Ovary (tissue), 10 donors: ENCODE measurements at regions of chr19 and their contacts with region 1.

Region 1: GRCh38 chr19:32224371-32225244 is 120.8 kb upstream of the ZNF507 start:
- DNase-seq: peak; percentile 49 to 81 (median 72)
- H3K4me3 ChIP-seq: no peak overlapping the region
- H3K27ac ChIP-seq: no peak overlapping the region
- H3K4me1 ChIP-seq: no peaks in the 10 kb centered on the region
- H3K27me3 ChIP-seq: no peaks in the 10 kb centered on the region
- CTCF ChIP-seq: peak; percentile 90 to 96 (median 95)
- EP300 ChIP-seq: no peak
- POLR2A ChIP-seq: no peak

Region 2: DNA sequence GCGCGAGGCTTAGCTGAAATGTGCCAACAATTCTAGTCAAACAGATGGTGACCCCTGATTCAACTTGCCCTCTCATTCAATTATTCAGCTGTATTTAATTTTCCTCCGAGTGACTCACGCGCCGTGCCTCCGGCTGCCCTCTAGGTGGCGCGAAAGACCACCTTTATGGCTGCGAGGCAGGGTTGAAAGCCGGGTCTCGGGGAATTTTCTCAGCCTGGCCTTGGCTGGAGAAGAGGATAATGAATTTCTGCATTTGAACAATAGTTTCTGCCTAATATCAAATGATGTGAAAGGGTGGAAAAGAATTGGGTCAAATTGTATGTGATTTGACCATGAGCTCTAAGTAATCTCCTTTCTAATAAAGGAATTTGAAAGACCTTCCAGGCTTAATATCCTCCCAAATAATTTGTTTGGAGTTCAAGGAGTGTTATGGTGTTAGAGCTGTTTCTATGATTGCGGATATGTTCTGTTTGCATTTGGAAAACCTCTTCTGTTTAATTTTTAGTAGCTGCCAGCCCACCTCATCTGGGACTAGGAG is 1541.5 kb before region 1 on chr19:
- intact Hi-C with region 1: loop called (anchors 2 to 5 kb)
- DNase-seq: peak; percentile 68 to 87 (median 82)
- H3K4me3 ChIP-seq: no peak overlapping the region
- H3K27ac ChIP-seq: no peak overlapping the region
- H3K4me1 ChIP-seq: no peaks in the 10 kb centered on the region
- H3K27me3 ChIP-seq: no peaks in the 10 kb centered on the region
- CTCF ChIP-seq: peak; percentile 74 to 91 (median 81)
- EP300 ChIP-seq: no peak
- POLR2A ChIP-seq: no peak

Region 3: DNA sequence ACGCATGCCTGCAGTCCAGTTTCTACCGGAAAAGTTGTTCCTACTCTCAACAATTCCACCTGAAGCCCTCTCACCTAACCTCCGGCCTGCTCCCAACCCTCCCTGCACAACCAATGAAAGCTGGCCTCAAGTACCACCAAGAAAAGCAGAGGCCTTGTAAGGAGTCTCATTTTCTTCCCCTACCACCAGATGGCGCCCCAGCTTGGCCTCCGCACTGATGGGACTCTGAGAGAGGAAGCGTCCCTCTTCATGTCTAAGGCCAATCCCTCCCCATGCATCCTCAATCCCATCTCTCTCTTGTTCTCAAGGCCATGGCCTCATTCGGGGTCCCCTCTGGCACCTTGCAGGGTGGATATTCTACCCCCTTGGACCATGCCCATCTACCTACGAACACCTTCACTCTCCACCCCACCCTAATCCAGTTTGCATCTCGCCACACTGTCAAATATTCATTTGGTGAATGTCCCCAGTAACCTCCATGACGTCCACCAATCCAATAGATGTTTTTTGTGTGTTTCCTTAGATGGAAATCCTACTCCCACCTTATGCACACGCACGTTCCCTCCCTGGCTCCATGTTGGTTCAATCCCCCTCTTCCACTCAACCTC is 1439.7 kb before region 1 on chr19:
- intact Hi-C with region 1: loop called in 2 of 4 experiments (anchors 10 kb)
- DNase-seq: peak; percentile 41 to 73 (median 63)
- H3K4me3 ChIP-seq: no peak overlapping the region
- H3K27ac ChIP-seq: no peak overlapping the region
- H3K4me1 ChIP-seq: no peaks in the 10 kb centered on the region
- H3K27me3 ChIP-seq: no peaks in the 10 kb centered on the region
- CTCF ChIP-seq: peak in 1 of 3 donors; percentile 38
- EP300 ChIP-seq: no peak
- POLR2A ChIP-seq: no peak

Region 4: GRCh38 chr19:31548941-31549340 is 675.7 kb before region 1 on chr19:
- intact Hi-C with region 1: loop called in 1 of 4 experiments (anchors 10 kb)
- DNase-seq: no peak
- H3K4me3 ChIP-seq: no peak overlapping the region
- H3K27ac ChIP-seq: no peak overlapping the region
- H3K4me1 ChIP-seq: peaks cover 3% of the 10 kb centered on the region
- H3K27me3 ChIP-seq: no peaks in the 10 kb centered on the region
- CTCF ChIP-seq: no peak
- EP300 ChIP-seq: no peak
- POLR2A ChIP-seq: no peak

Region 5: GRCh38 chr19:32067685-32068084 is 156.9 kb before region 1 on chr19:
- intact Hi-C with region 1: no loop called
- DNase-seq: no peak
- H3K4me3 ChIP-seq: no peak overlapping the region
- H3K27ac ChIP-seq: no peak overlapping the region
- H3K4me1 ChIP-seq: no peaks in the 10 kb centered on the region
- H3K27me3 ChIP-seq: no peaks in the 10 kb centered on the region
- CTCF ChIP-seq: no peak
- EP300 ChIP-seq: no peak
- POLR2A ChIP-seq: no peak